Activated CD4-positive, alpha-beta memory T cell treated with anti-CD3 and anti-CD28 coated beads for 36 hours (primary cell): ENCODE measurements at regions of chr2 and their contacts with region 1.

Region 1: DNA sequence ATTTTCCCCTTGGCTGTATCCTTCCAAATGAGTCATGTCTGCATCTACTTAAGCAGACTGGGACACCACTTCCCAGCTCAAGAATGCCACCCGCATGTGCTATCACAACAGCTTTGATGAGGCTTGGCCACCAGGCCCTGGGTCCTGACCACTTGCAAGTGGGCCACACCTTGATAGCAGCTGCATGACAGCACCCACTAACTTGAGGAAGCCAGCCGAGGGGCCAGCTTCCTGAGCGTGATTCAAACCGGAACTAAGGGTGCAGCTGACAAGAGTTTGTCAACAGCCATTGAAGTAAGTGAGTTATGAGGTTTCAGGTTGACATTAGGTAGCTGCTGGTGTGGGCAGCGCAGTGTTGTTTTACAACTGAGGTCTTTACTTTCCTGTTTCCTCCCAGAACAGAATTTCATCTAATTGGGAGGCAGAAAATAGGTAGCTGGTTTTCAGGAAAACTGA is 54.4 kb downstream of the EPHA4 start:
- DNase-seq: peak; percentile 89
- H3K4me3 Mint-ChIP-seq: no peak overlapping the region
- H3K27ac Mint-ChIP-seq: no peak overlapping the region
- H3K4me1 Mint-ChIP-seq: peaks cover 27% of the 10 kb centered on the region
- H3K27me3 Mint-ChIP-seq: no peaks in the 10 kb centered on the region

Region 2: GRCh38 chr2:220935789-220936321 is 581.9 kb before region 1 on chr2:
- CTCF ChIA-PET with region 1: no interaction called
- POLR2A ChIA-PET with region 1: no interaction called
- intact Hi-C with region 1: loop called (anchors 5 kb)
- DNase-seq: peak; percentile 57
- H3K4me3 Mint-ChIP-seq: no peak overlapping the region
- H3K27ac Mint-ChIP-seq: peak overlapping the region; percentile 44
- H3K4me1 Mint-ChIP-seq: peaks cover 17% of the 10 kb centered on the region
- H3K27me3 Mint-ChIP-seq: peaks cover 3% of the 10 kb centered on the region

Region 3: DNA sequence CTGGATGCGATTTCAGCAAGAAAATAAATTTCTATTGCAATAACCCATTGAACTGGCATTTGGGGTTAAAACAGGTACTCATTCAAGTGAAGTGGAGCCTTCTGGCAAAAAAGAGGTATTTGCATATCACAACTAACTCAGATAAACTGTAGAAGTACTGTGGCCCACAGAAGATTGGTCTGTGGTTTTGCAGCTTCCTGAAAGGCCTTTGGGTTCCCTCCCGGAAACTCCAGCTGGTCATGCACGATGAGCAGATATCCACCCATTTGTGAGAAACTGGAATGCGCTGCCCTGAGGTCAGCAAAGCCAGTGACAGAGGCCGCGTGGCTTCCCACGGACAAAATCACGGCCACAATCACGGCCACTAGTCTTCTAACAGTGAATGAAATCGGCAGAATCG is 51.9 kb before region 1 on chr2:
- CTCF ChIA-PET with region 1: no interaction called
- POLR2A ChIA-PET with region 1: no interaction called
- intact Hi-C with region 1: loop called (anchors 2 kb)
- DNase-seq: peak; percentile 14
- H3K4me3 Mint-ChIP-seq: no peak overlapping the region
- H3K27ac Mint-ChIP-seq: no peak overlapping the region
- H3K4me1 Mint-ChIP-seq: peaks cover 57% of the 10 kb centered on the region
- H3K27me3 Mint-ChIP-seq: no peaks in the 10 kb centered on the region

Region 4: GRCh38 chr2:221529943-221530652 is 12.4 kb after region 1 on chr2:
- CTCF ChIA-PET with region 1: interaction called, 6 read pairs
- POLR2A ChIA-PET with region 1: interaction called, 12 read pairs
- intact Hi-C with region 1: loop called (anchors 1 kb)
- DNase-seq: no peak
- H3K4me3 Mint-ChIP-seq: peak overlapping the region; percentile 68
- H3K27ac Mint-ChIP-seq: peak overlapping the region; percentile 82
- H3K4me1 Mint-ChIP-seq: peaks cover 61% of the 10 kb centered on the region
- H3K27me3 Mint-ChIP-seq: no peaks in the 10 kb centered on the region

Region 5: GRCh38 chr2:221641181-221641871 is 123.6 kb after region 1 on chr2:
- CTCF ChIA-PET with region 1: no interaction called
- POLR2A ChIA-PET with region 1: no interaction called
- intact Hi-C with region 1: loop called (anchors 5 kb)
- DNase-seq: no peak
- H3K4me3 Mint-ChIP-seq: no peak overlapping the region
- H3K27ac Mint-ChIP-seq: no peak overlapping the region
- H3K4me1 Mint-ChIP-seq: no peaks in the 10 kb centered on the region
- H3K27me3 Mint-ChIP-seq: peaks cover 6% of the 10 kb centered on the region

Region 6: GRCh38 chr2:221731443-221732145 is 213.9 kb after region 1 on chr2:
- CTCF ChIA-PET with region 1: no interaction called
- POLR2A ChIA-PET with region 1: no interaction called
- intact Hi-C with region 1: no loop called
- DNase-seq: no peak
- H3K4me3 Mint-ChIP-seq: no peak overlapping the region
- H3K27ac Mint-ChIP-seq: no peak overlapping the region
- H3K4me1 Mint-ChIP-seq: no peaks in the 10 kb centered on the region
- H3K27me3 Mint-ChIP-seq: no peaks in the 10 kb centered on the region

Region 7: DNA sequence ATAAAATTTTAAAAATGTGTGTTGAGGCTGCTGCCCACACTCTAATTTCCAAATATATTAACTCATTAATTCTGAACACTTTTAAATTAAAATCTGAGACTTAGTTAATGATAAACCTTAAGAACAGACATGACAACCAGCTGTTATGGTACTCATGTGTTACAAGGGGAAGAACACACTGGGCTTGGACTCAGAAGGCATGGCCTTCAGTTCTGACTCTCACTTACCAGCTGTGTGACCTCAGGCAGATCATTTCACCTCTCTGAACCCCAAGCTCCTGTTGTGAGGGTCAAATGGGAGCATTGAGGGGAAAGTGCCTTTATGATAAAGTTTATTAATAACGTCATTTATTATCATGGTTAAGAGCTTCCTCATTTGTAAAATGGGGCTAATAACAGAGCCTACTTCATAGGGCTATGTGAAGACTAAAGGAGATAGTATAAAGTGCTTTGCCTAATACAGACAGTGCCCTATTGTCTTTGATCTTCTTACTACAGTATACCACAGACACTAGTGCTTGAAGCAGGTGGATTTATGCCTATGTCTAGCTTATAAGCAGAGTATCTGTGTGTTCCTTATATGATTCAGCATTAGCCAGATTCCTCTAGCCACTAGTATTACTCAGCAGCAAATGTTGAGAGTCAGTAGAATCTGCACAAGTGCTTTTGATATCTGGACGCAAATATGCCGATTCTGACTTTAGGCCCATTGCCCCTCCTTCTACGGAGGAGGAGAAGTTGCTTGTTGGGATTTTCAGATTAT is 1006.2 kb after region 1 on chr2:
- CTCF ChIA-PET with region 1: no interaction called
- POLR2A ChIA-PET with region 1: no interaction called
- intact Hi-C with region 1: no loop called
- DNase-seq: no peak
- H3K4me3 Mint-ChIP-seq: no peak overlapping the region
- H3K27ac Mint-ChIP-seq: no peak overlapping the region
- H3K4me1 Mint-ChIP-seq: peaks cover 8% of the 10 kb centered on the region
- H3K27me3 Mint-ChIP-seq: no peaks in the 10 kb centered on the region